ENCODE measurements at regions of chr10 and their contacts with region 1.

Region 1: DNA sequence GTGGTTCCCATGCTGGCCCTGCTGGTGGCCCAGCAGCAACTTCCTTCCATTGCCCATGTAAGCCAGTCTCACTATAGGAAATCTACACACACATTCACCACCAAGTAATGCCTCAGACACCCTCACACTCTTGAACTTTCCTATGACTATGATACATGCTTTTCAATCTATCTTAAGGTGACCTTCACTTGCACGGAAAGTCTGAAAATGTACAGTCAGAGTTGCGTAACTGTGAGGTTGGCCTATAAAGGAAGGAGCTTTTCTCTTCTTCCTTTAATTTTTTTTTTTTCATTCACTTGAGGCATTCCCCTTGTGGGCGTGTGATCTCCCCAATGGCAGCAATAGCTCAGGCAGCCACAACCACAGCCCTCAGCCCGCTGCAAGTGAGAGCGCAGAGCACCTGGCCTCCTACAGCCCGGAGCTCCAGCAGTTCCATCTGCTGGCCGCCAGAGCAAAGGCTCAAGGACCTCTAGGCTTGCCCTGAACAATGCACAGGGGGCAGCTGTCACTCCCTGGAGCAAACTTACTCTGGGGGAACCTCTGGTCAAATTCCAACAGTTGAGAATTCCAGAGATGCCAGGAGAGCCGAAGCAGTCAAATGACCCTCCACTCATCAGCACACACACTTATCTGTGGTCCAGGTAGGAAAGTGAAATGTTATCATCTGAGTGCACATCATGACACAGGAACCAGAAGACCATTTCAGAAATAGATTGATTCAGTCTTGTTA is 123.1 kb upstream of the ADO start:
- DNase-seq: peak; percentile 90
- ATAC-seq: peak; percentile 98
- H3K4me3 ChIP-seq: no peak overlapping the region
- H3K27ac ChIP-seq: peak overlapping the region; percentile 65
- H3K4me1 ChIP-seq: peaks cover 33% of the 10 kb centered on the region
- H3K27me3 ChIP-seq: no peaks in the 10 kb centered on the region
- CTCF ChIP-seq: peak; percentile 71 to 82 (median 77)
- EP300 ChIP-seq: peak; percentile 91 to 96
- POLR2A ChIP-seq: no peak
- RAD21 ChIP-seq: peak; percentile 82

Region 2: GRCh38 chr10:62323751-62324150 is 357.6 kb before region 1 on chr10:
- CTCF ChIA-PET with region 1: no interaction called
- POLR2A ChIA-PET with region 1: no interaction called
- RAD21 ChIA-PET with region 1: no interaction called
- SMC1A ChIA-PET with region 1: no interaction called
- in situ Hi-C with region 1: no loop called
- intact Hi-C with region 1: no loop called
- DNase-seq: no peak
- ATAC-seq: no peak
- H3K4me3 ChIP-seq: no peak overlapping the region
- H3K27ac ChIP-seq: no peak overlapping the region
- H3K4me1 ChIP-seq: no peaks in the 10 kb centered on the region
- H3K27me3 ChIP-seq: no peaks in the 10 kb centered on the region
- CTCF ChIP-seq: no peak
- EP300 ChIP-seq: no peak
- POLR2A ChIP-seq: no peak
- RAD21 ChIP-seq: no peak

Region 3: DNA sequence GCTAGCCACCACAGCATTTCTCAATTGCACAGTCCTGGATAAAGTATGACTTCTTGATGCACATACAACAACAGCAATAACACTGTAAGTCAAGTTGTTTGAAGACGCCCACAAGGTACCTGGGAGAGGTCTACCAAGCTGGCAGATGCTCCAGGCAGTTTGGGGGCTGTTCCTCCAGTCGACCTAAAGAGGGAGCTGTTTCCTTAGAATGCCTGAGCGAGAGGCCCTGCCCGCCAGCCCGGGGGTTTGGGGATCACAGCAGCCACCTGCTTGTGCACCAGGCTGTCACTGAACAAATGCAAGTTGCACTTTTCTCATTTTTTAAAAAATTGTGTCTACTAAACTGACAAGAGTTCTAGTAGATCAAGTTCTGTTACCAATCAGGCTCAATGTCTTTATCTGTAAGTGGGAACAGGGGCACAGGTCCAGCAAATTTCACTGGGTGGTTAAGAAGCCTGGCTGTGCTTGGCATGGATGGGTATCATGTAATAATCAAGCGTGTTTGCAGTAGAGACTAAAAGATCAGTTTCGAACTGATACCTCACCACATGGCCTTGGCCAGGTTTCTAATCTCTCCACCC is 70.6 kb before region 1 on chr10:
- CTCF ChIA-PET with region 1: interaction called, 53 read pairs
- POLR2A ChIA-PET with region 1: interaction called, 7 read pairs
- RAD21 ChIA-PET with region 1: interaction called, 81 read pairs
- SMC1A ChIA-PET with region 1: interaction called, 54 read pairs
- in situ Hi-C with region 1: no loop called
- intact Hi-C with region 1: loop called (anchors 2 kb)
- DNase-seq: no peak
- ATAC-seq: peak; percentile 90
- H3K4me3 ChIP-seq: no peak overlapping the region
- H3K27ac ChIP-seq: no peak overlapping the region
- H3K4me1 ChIP-seq: peaks cover 30% of the 10 kb centered on the region
- H3K27me3 ChIP-seq: no peaks in the 10 kb centered on the region
- CTCF ChIP-seq: peak; percentile 90 to 99 (median 96)
- EP300 ChIP-seq: 0 out of 4 replicates have a peak, but pooled peaks have one; percentile 7 to 30
- POLR2A ChIP-seq: no peak
- RAD21 ChIP-seq: peak; percentile 99

Region 4: DNA sequence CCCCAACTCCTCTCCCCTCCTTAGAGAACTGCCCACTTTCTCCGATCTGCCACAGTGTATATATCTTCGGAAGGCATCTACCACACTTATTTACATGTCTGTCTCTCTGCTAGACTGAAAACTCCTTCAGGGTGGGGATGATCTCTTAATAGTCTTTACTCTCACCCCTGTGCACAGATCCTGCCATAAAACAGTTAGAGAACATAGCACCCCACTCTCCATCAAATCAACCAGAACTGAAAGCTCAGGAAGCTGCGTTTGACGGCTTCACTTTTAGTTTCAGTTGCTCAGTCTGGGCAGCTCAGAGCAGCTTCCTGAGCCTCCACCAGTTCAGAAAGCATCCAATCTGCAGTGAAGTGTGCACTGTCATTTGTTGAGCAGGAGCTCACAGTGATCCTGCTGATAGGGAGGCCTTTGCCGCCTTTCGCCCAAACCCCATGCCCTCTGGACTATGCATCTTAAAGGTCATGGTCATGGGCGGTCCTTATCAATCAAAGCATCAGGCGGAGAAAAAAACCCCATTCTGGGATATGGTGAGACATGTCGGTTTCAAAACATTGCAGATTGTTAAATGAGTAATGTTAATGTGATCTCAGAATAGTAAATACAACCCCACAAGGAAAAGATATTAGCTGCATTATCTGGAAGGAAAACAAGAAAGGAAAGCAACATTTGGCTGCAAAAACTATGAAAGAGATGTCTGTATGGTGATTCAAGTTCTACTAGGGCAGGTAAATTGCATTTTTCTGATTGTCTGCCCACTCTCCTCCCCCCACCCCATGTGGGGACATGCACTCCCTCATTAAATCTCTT is 43.9 kb before region 1 on chr10:
- CTCF ChIA-PET with region 1: interaction called, 41 read pairs
- POLR2A ChIA-PET with region 1: interaction called, 6 read pairs
- RAD21 ChIA-PET with region 1: interaction called, 63 read pairs
- SMC1A ChIA-PET with region 1: interaction called, 124 read pairs
- in situ Hi-C with region 1: no loop called
- intact Hi-C with region 1: loop called (anchors 1 kb)
- DNase-seq: peak; percentile 81
- ATAC-seq: peak; percentile 79
- H3K4me3 ChIP-seq: peak overlapping the region; percentile 12
- H3K27ac ChIP-seq: peak overlapping the region; percentile 95
- H3K4me1 ChIP-seq: peaks cover 85% of the 10 kb centered on the region
- H3K27me3 ChIP-seq: no peaks in the 10 kb centered on the region
- CTCF ChIP-seq: no peak
- EP300 ChIP-seq: peak; percentile 23 to 60; a peak in 3 of 4 replicates
- POLR2A ChIP-seq: peak; percentile 61
- RAD21 ChIP-seq: no peak

Region 5: GRCh38 chr10:62666275-62666674 is 15.1 kb before region 1 on chr10:
- CTCF ChIA-PET with region 1: interaction called, 46 read pairs
- POLR2A ChIA-PET with region 1: interaction called, 24 read pairs
- RAD21 ChIA-PET with region 1: interaction called, 30 read pairs
- SMC1A ChIA-PET with region 1: interaction called, 71 read pairs
- in situ Hi-C with region 1: no loop called
- intact Hi-C with region 1: no loop called
- DNase-seq: no peak
- ATAC-seq: peak; percentile 19; the same call in 1 of the 3 replicates
- H3K4me3 ChIP-seq: no peak overlapping the region
- H3K27ac ChIP-seq: no peak overlapping the region
- H3K4me1 ChIP-seq: peaks cover 4% of the 10 kb centered on the region; the same call in 1 of the 2 replicates
- H3K27me3 ChIP-seq: no peaks in the 10 kb centered on the region
- CTCF ChIP-seq: no peak
- EP300 ChIP-seq: no peak
- POLR2A ChIP-seq: no peak
- RAD21 ChIP-seq: no peak

Region 6: GRCh38 chr10:62732841-62733653 is 51.7 kb after region 1 on chr10:
- CTCF ChIA-PET with region 1: interaction called, 39 read pairs
- POLR2A ChIA-PET with region 1: interaction called, 29 read pairs
- RAD21 ChIA-PET with region 1: interaction called, 87 read pairs
- SMC1A ChIA-PET with region 1: interaction called, 104 read pairs
- in situ Hi-C with region 1: no loop called
- intact Hi-C with region 1: loop called (anchors 1 kb)
- DNase-seq: peak; percentile 94
- ATAC-seq: peak; percentile 83
- H3K4me3 ChIP-seq: peak overlapping the region; percentile 41; the same call in 1 of the 2 replicates
- H3K27ac ChIP-seq: peak overlapping the region; percentile 93
- H3K4me1 ChIP-seq: peaks cover 50% of the 10 kb centered on the region
- H3K27me3 ChIP-seq: no peaks in the 10 kb centered on the region
- CTCF ChIP-seq: no peak
- EP300 ChIP-seq: peak; percentile 83 to 87; a peak in 3 of 4 replicates
- POLR2A ChIP-seq: no peak; the same call in 1 of the 2 replicates
- RAD21 ChIP-seq: peak; percentile 38; the same call in 1 of the 2 replicates

Region 7: DNA sequence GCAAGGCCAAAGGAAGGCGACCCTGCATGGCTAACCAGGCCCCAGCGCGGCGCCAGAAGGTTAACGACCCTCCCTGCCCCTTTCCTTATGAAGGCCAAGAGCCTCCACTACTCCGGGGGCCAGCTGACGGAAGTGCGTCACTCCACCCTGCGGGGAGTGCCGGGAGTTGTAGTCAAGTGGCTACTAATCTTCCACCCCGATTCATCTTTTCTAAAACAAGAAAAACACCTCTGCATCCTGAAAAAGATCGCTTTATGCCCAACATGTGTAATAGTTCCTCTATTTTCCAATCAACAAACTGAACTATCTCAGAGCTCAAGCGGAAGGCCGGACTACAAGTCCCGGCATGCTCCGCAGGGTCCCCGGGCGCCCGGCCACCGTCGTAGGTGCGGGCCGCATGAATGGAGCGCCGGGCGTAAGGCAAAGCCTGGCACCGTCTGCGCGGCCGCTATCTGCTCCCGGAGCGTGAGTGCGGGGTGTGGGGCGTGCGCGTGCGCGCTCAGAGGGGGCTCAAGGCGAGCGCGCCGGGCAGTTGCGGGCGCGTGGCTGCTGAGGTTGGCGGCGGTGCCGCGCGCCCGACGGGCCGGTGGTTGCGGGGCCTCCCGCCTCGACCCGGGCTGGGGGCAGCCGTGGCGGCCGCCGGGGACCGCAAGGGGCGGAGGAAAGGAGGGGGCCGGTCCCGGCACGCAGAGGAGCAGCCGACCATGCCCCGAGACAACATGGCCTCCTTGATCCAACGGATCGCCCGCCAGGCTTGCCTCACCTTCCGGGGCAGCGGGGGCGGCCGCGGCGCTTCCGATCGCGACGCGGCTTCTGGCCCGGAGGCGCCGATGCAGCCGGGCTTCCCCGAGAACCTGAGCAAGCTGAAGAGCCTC is 123.2 kb after region 1 on chr10 and contains the start of gene ADO:
- CTCF ChIA-PET with region 1: interaction called, 5 read pairs
- POLR2A ChIA-PET with region 1: interaction called, 4 read pairs
- RAD21 ChIA-PET with region 1: interaction called, 19 read pairs
- SMC1A ChIA-PET with region 1: interaction called, 49 read pairs
- in situ Hi-C with region 1: no loop called
- intact Hi-C with region 1: no loop called
- DNase-seq: peak; percentile 59
- ATAC-seq: peak; percentile 83
- H3K4me3 ChIP-seq: peak within 1 kb of the TSS; percentile 88
- H3K27ac ChIP-seq: peak within 1 kb of the TSS; percentile 98
- H3K4me1 ChIP-seq: peaks cover 4% of the 10 kb centered on the region; the same call in 1 of the 2 replicates
- H3K27me3 ChIP-seq: no peaks in the 10 kb centered on the region
- CTCF ChIP-seq: no peak
- EP300 ChIP-seq: peak in 1 of 2 experiments; percentile 26; a peak in 1 of 4 replicates
- POLR2A ChIP-seq: peak; percentile 89
- RAD21 ChIP-seq: 0 out of 2 replicates have a peak, but pooled peaks have one; percentile 6
- polyA plus RNA-seq, gene ADO: 4.3 to 8.5 TPM

Region 8: DNA sequence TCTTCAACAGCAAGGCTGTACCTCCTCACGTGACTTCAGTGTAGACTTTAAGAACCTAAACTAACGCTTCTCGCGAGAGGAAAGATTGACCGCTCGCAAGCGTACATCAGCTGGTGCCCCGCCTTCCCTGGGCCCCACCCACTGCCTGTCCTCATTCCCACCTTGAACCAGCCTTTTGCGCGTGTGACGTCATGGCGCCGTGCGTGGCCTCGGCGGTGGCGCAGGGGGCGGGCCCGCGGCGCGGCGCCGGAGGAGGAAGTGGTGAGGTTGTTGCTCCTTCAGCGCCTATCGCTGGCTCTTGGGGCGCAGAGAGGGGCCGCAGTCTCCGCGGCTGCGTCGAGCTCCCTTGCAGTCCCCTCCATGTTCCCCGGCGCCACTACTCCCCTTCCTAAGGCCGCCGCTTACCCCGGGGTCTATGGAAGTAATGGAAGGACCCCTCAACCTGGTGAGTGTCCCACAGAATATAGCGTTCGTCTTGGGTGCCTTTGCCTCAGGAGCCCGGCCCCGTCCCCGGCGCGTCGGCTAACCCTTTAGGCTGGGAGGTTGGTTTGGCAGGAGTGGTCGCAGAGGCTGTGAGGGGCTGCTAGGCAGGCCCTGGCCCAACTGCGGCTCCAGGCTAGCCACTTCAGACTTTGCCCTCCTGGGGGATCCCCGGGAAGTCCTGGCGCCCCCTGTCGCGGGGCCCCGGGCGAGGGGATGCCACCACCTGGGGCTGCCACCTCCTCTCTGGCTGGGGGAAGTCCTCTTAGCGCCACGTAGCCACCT is 451.9 kb after region 1 on chr10 and contains the start of gene NRBF2:
- CTCF ChIA-PET with region 1: no interaction called
- POLR2A ChIA-PET with region 1: no interaction called
- RAD21 ChIA-PET with region 1: no interaction called
- SMC1A ChIA-PET with region 1: no interaction called
- in situ Hi-C with region 1: no loop called
- intact Hi-C with region 1: loop called (anchors 10 kb)
- DNase-seq: peak; percentile 96
- ATAC-seq: peak; percentile 93
- H3K4me3 ChIP-seq: peak within 1 kb of the TSS; percentile 89
- H3K27ac ChIP-seq: peak within 1 kb of the TSS; percentile 94
- H3K4me1 ChIP-seq: peaks cover 6% of the 10 kb centered on the region
- H3K27me3 ChIP-seq: no peaks in the 10 kb centered on the region
- CTCF ChIP-seq: peak in 2 of 3 experiments; percentile 32 to 42; a peak in 3 of 6 replicates
- EP300 ChIP-seq: no peak
- POLR2A ChIP-seq: peak; percentile 99
- RAD21 ChIP-seq: no peak
- polyA plus RNA-seq, gene NRBF2: 33.2 to 35.0 TPM